ENCODE measurements at regions of chr7 and their contacts with region 1.

Region 1: DNA sequence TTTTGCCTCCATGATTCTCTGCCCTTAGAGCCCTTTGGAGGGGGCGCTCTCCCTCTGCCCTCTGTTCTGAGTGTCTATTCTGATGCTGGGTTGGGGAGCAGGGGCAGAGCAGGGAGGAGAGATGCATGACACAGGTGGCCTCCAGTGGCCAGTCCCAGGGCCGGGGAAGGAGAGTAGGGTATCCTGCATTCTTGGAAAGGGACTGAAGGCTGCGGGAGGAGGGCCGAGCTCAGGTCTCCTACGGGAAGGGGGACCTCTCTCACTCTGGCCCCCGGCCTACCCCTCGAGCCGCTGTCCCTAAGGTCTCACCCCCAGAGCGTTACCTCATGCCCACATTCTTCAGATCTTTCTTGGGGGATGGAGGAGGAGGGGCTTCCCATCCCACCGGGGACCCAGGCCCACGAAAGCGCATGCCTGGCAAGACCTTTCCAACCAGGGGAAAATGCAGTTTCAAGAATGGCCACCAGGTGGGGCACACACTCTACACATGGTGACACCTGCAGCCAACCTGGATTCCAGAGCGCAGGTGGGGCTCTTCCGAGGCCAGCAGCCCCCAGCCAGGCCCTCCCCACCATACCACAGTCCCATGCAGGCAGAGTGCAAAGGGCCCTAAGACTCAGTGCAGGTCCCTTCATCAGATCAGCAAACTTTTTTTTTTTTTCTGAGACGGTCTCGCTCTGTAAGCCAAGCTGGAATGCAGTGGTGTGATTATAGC is 86.4 kb downstream of the MYL10 start:
- DNase-seq: peak; percentile 85
- H3K4me3 ChIP-seq: no peak overlapping the region; a peak in 1 of 4 replicates
- H3K27ac ChIP-seq: no peak overlapping the region
- H3K4me1 ChIP-seq: peaks cover 0 to under 1% of the 10 kb centered on the region in 2 experiments; a peak in 1 of 4 replicates
- H3K27me3 ChIP-seq: no peaks in the 10 kb centered on the region
- CTCF ChIP-seq: peak; percentile 99
- EP300 ChIP-seq: no peak
- RAD21 ChIP-seq: peak; percentile 97

Region 2: DNA sequence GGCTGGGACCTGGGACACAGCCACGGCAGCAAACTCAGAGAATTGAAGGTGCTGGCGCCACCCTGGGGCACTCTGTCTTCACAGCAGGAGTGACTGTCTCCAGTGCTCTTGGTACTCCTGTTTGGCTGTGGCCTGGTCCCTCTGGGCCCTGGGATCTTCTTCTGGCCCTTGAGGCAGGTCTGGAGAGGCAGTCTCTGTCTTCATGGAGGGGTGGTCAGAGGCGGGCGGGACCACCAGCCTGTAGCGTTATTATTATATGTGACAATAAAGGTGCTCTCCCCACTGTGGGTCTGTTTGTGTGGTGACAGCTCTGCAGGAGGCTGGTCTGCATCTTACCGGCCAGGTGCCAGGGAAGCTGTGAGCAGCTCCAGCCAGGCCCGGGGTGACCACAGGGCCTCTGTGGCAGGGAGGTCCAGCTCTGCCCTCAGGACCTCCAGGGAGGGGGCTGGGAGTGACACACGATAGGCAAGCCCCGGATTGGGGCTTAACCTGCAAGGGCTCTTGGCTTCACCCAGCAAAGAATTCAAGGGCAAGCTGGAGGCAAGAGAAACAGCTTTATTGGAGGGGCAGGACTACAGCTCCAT is 16.1 kb after region 1 on chr7:
- CTCF ChIA-PET with region 1: interaction called, 47 read pairs
- POLR2A ChIA-PET with region 1: no interaction called
- DNase-seq: no peak
- H3K4me3 ChIP-seq: no peak overlapping the region
- H3K27ac ChIP-seq: no peak overlapping the region
- H3K4me1 ChIP-seq: no peaks in the 10 kb centered on the region
- H3K27me3 ChIP-seq: peaks cover 17% of the 10 kb centered on the region
- CTCF ChIP-seq: no peak; the same call in 1 of the 2 replicates
- EP300 ChIP-seq: no peak
- RAD21 ChIP-seq: peak; percentile 36

Region 3: GRCh38 chr7:101602484-101603241 is 60.0 kb after region 1 on chr7:
- CTCF ChIA-PET with region 1: interaction called, 36 read pairs
- POLR2A ChIA-PET with region 1: no interaction called
- DNase-seq: peak; percentile 94
- H3K4me3 ChIP-seq: no peak overlapping the region; a peak in 1 of 4 replicates
- H3K27ac ChIP-seq: no peak overlapping the region
- H3K4me1 ChIP-seq: peaks cover 0 to 11% of the 10 kb centered on the region in 2 experiments; a peak in 1 of 4 replicates
- H3K27me3 ChIP-seq: no peaks in the 10 kb centered on the region
- CTCF ChIP-seq: peak; percentile 99
- EP300 ChIP-seq: peak in 1 of 2 experiments; percentile 8; a peak in 1 of 4 replicates
- RAD21 ChIP-seq: peak; percentile 98

Region 4: GRCh38 chr7:101743241-101743994 is 200.7 kb after region 1 on chr7:
- CTCF ChIA-PET with region 1: interaction called, 13 read pairs
- POLR2A ChIA-PET with region 1: no interaction called
- DNase-seq: peak; percentile 94
- H3K4me3 ChIP-seq: peak overlapping the region; percentile 54 to 90
- H3K27ac ChIP-seq: no peak overlapping the region
- H3K4me1 ChIP-seq: no peaks in the 10 kb centered on the region; a peak in 1 of 4 replicates
- H3K27me3 ChIP-seq: no peaks in the 10 kb centered on the region; the same call in 1 of the 2 replicates
- CTCF ChIP-seq: peak; percentile 86
- EP300 ChIP-seq: no peak; a peak in 2 of 4 replicates
- RAD21 ChIP-seq: peak; percentile 37

Region 5: DNA sequence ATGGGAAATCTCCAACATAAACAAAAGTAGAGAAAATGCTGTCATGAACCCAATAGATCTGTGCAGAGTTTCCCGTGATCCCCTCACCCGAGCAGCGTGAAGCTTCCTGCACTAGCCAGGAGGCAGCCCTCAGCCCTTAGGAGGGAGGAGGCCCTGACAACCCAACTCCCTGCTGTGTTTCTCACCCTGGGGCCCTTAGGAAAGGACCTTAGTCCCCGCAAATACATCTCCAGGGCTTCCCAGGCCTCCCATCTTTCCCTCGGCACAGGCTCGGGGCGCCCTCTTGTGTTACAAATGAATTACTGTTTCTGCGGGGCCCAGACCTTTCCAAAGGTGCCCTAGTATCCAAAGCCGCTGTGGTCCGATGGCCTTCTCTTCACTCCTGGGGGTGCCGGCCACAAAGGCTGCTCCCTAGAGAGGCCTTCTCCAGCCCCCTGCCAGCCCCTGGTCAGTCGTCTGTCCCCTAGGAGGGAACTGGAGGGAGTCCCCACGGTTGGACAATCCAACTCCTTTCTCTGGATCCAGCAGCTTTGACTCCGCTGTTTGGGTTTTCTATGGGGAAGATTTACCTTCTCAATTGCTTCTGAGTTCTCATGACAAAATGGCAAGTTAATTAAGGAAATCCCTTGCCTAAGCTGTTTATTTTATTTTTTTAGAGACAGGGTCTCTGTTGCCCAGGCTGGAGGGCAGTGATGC is 694.1 kb after region 1 on chr7:
- CTCF ChIA-PET with region 1: interaction called, 20 read pairs
- POLR2A ChIA-PET with region 1: no interaction called
- DNase-seq: peak; percentile 95
- H3K4me3 ChIP-seq: no peak overlapping the region
- H3K27ac ChIP-seq: no peak overlapping the region; a peak in 1 of 4 replicates
- H3K4me1 ChIP-seq: peaks cover 0 to 2% of the 10 kb centered on the region in 2 experiments; a peak in 1 of 4 replicates
- H3K27me3 ChIP-seq: no peaks in the 10 kb centered on the region
- CTCF ChIP-seq: peak; percentile 97
- EP300 ChIP-seq: no peak
- RAD21 ChIP-seq: peak; percentile 99